Vagina (tissue), 2 donors: ENCODE measurements at regions of chr11 and their contacts with region 1.

Region 1: GRCh38 chr11:1572197-1573076 is at the start of gene DUSP8:
- DNase-seq: peak in 1 of 2 donors; percentile 86
- H3K4me3 ChIP-seq: peak within 1 kb of the TSS; percentile 50 to 75
- H3K27ac ChIP-seq: peak within 1 kb of the TSS; percentile 76
- H3K4me1 ChIP-seq: peaks cover 41% of the 10 kb centered on the region
- H3K27me3 ChIP-seq: no peaks in the 10 kb centered on the region
- CTCF ChIP-seq: no peak
- POLR2A ChIP-seq: peak in 1 of 2 donors; percentile 11
- total RNA-seq, gene DUSP8: 2.9 TPM

Region 2: GRCh38 chr11:1202776-1203504 is 369.5 kb before region 1 on chr11:
- intact Hi-C with region 1: loop called (anchors 10 kb)
- DNase-seq: no peak
- H3K4me3 ChIP-seq: no peak overlapping the region
- H3K27ac ChIP-seq: no peak overlapping the region
- H3K4me1 ChIP-seq: peaks cover 12% of the 10 kb centered on the region
- H3K27me3 ChIP-seq: no peaks in the 10 kb centered on the region
- CTCF ChIP-seq: peak; percentile 63 to 96 (median 78)
- POLR2A ChIP-seq: no peak

Region 3: DNA sequence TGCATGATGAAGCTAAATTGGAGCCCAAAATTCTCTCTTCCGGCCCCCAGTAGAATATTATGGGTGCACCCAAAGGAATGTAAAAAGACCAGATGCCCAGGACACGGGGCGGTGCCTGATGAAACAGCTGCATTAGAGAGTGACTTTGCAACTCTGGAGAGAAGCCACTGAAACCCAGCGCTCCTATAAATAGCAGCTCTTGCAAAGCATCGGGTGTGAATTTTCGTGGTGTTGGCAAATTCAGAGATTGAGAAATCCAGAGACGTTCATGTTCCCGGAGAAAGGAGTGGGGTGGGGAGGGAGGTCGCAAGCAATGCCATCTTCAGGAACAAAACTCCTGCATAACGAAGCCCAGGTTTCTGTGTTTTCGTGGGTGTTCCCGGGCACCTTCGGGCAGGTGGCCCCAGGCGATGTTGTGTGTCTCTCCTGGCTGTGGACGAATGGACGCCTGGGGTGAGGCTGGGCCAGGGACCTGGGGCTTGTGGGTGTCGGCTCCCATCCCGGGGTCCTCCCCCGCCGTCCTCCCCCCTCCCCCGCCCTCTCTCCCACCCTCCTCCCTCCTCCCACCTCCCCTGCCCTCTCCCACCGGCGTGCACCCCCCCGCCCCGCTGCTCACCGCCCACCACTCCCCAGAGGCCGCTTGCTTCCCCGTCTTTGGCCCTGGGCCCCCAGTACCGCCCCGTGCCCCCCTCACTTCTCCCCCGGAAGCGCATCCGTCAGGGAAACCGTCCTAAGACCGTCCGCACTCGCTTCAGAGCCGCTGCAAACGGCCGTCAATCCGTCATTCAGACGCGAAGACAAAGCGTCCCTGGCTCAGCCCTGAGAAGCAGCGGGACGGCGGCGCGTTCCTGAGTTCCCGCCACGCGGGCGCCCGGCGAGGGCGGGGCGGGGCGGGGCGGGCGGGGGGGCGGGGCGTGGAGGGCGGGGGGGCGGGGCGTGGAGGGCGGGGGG is 236.4 kb before region 1 on chr11:
- intact Hi-C with region 1: loop called (anchors 5 kb)
- DNase-seq: no peak
- H3K4me3 ChIP-seq: peak overlapping the region; percentile 50 to 64
- H3K27ac ChIP-seq: peak overlapping the region; percentile 88
- H3K4me1 ChIP-seq: peaks cover 14% of the 10 kb centered on the region
- H3K27me3 ChIP-seq: no peaks in the 10 kb centered on the region
- CTCF ChIP-seq: no peak
- POLR2A ChIP-seq: peak in 1 of 2 donors; percentile 27

Region 4: DNA sequence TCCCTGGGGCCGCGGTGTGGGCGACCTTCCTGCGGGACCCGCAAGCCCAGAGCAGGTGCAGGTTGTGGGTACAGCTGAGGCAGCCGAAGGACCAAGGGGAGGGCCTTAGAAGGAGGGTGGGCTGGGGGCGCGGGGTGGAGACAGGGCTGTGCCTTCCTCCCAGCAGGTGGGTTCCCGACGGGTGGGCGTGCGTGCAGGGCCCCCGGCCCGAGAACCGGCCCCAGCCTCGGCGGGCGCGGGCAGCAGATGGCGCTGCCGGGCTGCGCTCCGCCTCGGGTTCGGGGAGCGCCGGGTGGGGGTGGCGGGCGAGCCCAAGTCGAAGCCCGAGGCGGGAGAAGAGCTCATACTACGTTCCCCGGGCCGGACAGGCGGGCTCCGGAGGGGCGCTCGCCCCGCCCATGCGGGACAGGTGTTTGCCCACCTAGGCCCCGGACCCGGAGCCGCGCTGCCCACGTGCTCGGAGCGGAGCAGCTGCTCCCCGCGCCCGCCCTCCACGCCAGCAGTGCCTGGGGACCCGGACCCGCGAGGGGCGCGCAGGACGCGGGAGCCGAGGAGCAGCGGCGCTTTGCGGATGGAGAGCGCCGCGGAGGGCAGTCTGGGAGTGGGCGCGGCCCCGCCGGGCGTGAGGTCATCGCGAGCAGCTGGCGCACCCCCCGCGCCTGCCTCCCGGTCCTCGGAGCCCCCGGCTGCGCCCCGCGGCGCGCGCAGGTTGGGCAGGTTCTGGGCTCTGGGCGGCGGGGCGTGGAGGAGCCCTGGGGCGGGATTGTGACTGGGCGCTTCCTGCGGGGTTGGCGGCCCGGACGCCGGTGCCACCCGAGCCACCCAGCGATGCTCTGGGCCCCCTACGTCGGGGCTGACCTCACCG is 25.7 kb before region 1 on chr11:
- intact Hi-C with region 1: loop called (anchors 2 kb)
- DNase-seq: no peak
- H3K4me3 ChIP-seq: peak overlapping the region; percentile 18 to 48
- H3K27ac ChIP-seq: peak overlapping the region; percentile 33
- H3K4me1 ChIP-seq: peaks cover 30% of the 10 kb centered on the region
- H3K27me3 ChIP-seq: peaks cover 7% of the 10 kb centered on the region
- CTCF ChIP-seq: peak in 2 of 3 experiments; percentile 49 to 60
- POLR2A ChIP-seq: no peak

Region 5: DNA sequence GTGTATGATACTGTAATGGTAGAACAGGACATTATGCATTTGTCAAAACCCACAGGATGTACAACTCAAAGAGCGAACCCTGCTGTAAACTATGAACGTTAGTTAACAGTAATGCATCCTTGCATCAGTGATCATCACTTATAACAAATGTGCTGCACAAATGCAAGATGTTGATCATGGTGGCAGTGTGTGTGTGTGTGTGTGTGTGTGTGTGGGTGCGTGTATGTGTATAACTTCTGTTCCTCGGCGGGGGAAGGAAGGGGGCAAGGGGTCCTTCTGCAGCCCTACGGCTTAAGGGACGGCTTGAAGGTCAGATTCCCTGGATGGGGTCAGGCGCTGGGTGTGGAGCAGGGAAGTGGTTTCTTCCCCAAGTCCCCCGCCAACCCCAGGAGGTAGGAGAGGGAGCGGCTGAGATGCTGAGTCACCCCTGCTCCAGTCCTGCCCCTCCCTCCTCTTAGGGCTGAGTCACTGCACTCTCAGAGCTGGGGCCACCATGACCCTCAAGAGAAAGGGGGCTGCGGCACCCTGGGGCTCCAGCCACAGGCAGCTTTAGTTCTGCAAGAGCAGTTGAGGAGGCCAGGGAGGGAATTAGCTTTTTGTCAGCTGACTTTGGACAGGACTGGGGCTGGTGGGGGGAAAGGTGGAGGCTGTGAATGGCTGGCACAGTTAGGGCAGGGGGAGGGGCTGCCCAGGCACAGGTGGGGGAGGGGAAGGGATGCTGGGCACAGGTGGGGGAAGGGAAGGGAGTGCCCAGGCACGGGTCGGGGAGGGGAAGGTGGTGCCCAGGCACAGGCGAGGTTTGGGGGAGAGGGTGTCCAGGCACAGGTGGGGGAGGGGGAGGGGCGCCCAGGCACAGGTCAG is 200.1 kb after region 1 on chr11:
- intact Hi-C with region 1: no loop called
- DNase-seq: no peak
- H3K4me3 ChIP-seq: peak overlapping the region in 1 of 2 donors; percentile 15
- H3K27ac ChIP-seq: peak overlapping the region; percentile 68
- H3K4me1 ChIP-seq: peaks cover 55% of the 10 kb centered on the region
- H3K27me3 ChIP-seq: no peaks in the 10 kb centered on the region
- CTCF ChIP-seq: no peak
- POLR2A ChIP-seq: no peak